Activated CD4-positive, alpha-beta memory T cell treated with anti-CD3 and anti-CD28 coated beads, Interleukin-2, amount 10 ng/mL, durations not matched to agents 7 days and 5 days (primary cell): ENCODE measurements at regions of chr16 and their contacts with region 1.

Region 1: GRCh38 chr16:4846891-4847773 is at the starts of genes GLYR1 and UBN1:
- DNase-seq: peak; percentile 100
- H3K4me3 Mint-ChIP-seq: peak within 1 kb of the TSS; percentile 86
- H3K27ac Mint-ChIP-seq: peak within 1 kb of the TSS; percentile 86
- H3K4me1 Mint-ChIP-seq: peaks cover 59% of the 10 kb centered on the region
- H3K27me3 Mint-ChIP-seq: no peaks in the 10 kb centered on the region
- total RNA-seq, gene GLYR1: 80.4 to 85.4 TPM
- total RNA-seq, gene UBN1: 39.2 to 39.6 TPM

Region 2: GRCh38 chr16:4766874-4767628 is 80.1 kb before region 1 on chr16 and contains the start of gene ZNF500:
- CTCF ChIA-PET with region 1: no interaction called
- POLR2A ChIA-PET with region 1: interaction called, 13 read pairs
- DNase-seq: peak; percentile 96
- H3K4me3 Mint-ChIP-seq: peak within 1 kb of the TSS; percentile 89
- H3K27ac Mint-ChIP-seq: peak within 1 kb of the TSS; percentile 92
- H3K4me1 Mint-ChIP-seq: peaks cover 36% of the 10 kb centered on the region
- H3K27me3 Mint-ChIP-seq: no peaks in the 10 kb centered on the region
- total RNA-seq, gene ZNF500: 14.7 to 15.3 TPM

Region 3: DNA sequence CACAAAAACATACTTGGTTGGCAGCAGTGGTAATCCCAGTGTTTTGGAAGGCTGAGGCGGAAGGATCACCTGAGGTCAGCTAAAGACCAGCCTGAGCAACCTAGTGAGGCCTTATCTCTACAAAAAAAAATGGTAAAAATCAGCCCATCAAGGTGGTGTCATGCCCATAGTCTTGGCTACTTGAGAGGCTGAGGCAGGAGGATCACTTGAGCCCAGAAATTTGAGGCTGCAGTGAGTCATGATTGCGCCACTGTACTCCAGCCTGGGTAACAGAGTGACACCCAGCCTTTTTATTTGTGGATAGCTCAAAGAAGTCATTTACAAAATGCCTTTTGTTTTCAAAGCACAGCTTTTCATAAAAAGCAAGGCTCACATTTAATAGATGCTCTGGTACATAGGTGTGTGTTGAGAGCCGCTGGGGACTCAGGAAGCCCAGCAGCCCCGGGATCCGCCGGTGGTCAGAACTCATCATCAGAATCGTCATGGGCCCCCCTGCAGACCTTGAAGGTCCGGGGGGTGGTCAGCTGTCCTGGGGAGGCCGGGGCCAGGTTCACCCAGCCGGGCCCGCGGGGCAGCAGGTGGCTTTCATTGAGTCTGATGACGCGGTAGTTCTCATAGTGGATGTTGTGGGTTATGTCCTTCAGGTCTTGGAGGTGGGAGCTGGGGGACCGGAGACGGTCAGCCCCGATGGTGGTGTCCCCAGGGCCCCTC is 69.6 kb before region 1 on chr16:
- CTCF ChIA-PET with region 1: no interaction called
- POLR2A ChIA-PET with region 1: no interaction called
- DNase-seq: no peak
- H3K4me3 Mint-ChIP-seq: no peak overlapping the region
- H3K27ac Mint-ChIP-seq: no peak overlapping the region
- H3K4me1 Mint-ChIP-seq: no peaks in the 10 kb centered on the region
- H3K27me3 Mint-ChIP-seq: no peaks in the 10 kb centered on the region

Region 4: GRCh38 chr16:4836727-4837126 is 10.4 kb before region 1 on chr16:
- CTCF ChIA-PET with region 1: interaction called, 3 read pairs
- POLR2A ChIA-PET with region 1: interaction called, 14 read pairs
- DNase-seq: no peak
- H3K4me3 Mint-ChIP-seq: no peak overlapping the region
- H3K27ac Mint-ChIP-seq: no peak overlapping the region
- H3K4me1 Mint-ChIP-seq: peaks cover 13% of the 10 kb centered on the region
- H3K27me3 Mint-ChIP-seq: no peaks in the 10 kb centered on the region

Region 5: DNA sequence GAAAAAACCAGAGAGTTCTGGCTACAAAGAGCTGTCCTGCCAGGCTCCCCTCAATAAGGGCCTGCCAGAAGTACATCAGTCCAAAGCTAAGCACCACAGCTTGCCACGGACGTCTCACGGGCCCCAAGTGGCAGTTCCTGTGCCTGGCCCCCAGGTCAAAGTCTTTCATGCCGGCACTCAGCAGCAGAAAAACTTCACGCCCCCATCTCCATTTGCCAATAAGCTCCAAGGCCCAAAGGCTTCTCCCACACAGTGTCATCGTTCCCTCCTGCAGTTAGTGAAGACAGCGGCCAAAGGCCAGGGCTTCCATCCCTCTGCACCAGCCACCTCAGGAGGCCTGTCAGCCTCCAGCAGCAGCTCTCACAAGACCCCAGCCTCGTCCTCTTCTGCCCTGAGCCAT is 27.5 kb after region 1 on chr16:
- CTCF ChIA-PET with region 1: no interaction called
- POLR2A ChIA-PET with region 1: no interaction called
- DNase-seq: no peak
- H3K4me3 Mint-ChIP-seq: no peak overlapping the region
- H3K27ac Mint-ChIP-seq: no peak overlapping the region
- H3K4me1 Mint-ChIP-seq: peaks cover 10% of the 10 kb centered on the region
- H3K27me3 Mint-ChIP-seq: no peaks in the 10 kb centered on the region

Region 6: DNA sequence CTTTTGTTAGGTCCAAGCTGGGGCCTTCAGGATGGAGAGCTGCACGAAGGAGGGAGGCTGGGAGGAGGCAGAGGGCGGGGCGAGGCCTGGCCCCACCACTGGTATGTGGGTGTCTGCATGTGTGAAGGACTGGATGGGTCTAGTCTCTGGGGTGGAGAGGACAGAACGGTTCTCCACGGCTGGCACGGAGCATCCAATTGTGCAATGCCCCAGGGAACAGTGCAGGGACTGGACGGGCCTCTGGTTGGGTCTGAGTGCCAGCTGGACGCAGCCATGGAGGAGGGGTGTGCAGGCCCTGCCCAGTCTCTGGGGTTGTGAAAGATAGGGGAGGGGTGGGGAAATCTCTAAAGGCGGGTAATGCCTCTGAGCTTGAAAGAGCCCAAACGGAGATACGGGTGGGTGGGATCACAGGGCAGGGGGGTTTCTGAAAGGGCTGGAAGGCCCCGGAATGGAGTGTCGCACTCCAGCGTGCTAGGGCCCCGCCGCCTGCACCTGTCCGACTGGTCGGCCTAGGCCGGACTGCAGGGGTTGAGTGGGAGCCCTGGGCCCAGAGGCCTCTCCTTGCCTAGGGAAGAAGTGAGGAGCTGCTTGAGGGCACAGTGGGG is 88.2 kb after region 1 on chr16:
- CTCF ChIA-PET with region 1: no interaction called
- POLR2A ChIA-PET with region 1: no interaction called
- DNase-seq: no peak
- H3K4me3 Mint-ChIP-seq: no peak overlapping the region
- H3K27ac Mint-ChIP-seq: no peak overlapping the region
- H3K4me1 Mint-ChIP-seq: peaks cover 6% of the 10 kb centered on the region
- H3K27me3 Mint-ChIP-seq: peaks cover 30% of the 10 kb centered on the region